Panc1 (cell line): ENCODE measurements at regions of chr7 and their contacts with region 1.

Region 1: DNA sequence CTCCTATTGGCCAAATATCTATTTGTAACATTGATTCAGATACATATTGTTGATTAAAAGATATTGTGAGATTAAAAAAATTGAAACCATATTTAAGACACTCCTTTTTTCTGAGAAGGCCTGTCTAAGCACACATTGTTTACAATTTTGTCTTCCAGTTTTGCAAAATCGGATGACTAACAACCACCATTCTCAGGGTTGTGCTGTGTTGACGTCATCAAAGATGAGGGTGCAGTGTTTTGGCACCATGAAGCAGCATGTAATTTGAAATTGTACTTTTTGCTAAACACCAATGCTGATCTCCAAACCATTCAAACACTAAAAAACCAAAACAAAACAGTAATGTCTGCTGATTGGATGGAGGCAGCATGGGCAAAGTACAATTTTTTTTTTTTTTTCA is 7.4 kb downstream of the CREB5 start:
- DNase-seq: no peak
- ATAC-seq: no peak
- H3K4me3 ChIP-seq: no peak overlapping the region
- H3K27ac ChIP-seq: no peak overlapping the region
- H3K4me1 ChIP-seq: no peaks in the 10 kb centered on the region
- H3K27me3 ChIP-seq: peaks cover 32% of the 10 kb centered on the region
- CTCF ChIP-seq: no peak

Region 2: DNA sequence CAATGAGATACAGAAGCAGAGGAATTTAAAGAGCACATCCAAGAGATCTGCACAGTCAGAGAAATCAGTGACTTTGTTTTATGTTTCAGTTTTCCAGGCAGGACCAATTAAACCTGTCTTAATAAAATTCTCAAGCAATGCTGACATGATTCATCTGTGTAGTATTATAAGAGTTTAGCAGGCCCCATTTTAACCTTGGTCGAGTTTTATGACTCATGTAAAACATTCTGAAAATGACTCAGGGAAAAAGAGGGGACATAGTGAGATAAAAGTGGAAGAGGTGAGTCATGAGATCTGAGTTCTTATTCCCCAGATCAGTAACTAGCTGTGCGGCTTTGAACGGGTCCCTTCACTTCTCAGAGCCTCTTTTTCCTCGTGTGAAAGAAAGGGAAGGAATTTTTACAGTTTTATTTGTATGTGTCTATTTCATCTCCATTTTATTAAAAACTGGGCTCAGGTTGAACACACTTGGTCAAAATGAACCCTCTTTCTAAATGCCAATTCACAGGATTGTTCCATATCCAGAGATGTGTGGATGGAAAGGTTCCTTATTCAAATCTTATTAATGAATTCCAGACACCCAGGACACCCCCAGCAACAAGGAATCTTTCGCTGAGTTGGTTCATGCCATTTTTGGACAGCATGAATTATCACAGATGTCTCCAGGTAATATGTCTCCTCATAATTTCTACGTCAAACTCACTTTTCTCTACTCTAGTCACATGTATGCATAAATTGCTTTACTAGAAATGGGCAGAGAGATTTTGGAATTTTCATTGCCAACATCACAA is 382.3 kb before region 1 on chr7:
- CTCF ChIA-PET with region 1: no interaction called
- POLR2A ChIA-PET with region 1: no interaction called
- in situ Hi-C with region 1: no loop called
- intact Hi-C with region 1: no loop called
- DNase-seq: peak; percentile 96
- ATAC-seq: peak; percentile 92
- H3K4me3 ChIP-seq: peak overlapping the region in 1 of 2 experiments; percentile 17; a peak in 1 of 4 replicates
- H3K27ac ChIP-seq: peak overlapping the region; percentile 93
- H3K4me1 ChIP-seq: peaks cover 76% of the 10 kb centered on the region
- H3K27me3 ChIP-seq: no peaks in the 10 kb centered on the region
- CTCF ChIP-seq: no peak

Region 3: DNA sequence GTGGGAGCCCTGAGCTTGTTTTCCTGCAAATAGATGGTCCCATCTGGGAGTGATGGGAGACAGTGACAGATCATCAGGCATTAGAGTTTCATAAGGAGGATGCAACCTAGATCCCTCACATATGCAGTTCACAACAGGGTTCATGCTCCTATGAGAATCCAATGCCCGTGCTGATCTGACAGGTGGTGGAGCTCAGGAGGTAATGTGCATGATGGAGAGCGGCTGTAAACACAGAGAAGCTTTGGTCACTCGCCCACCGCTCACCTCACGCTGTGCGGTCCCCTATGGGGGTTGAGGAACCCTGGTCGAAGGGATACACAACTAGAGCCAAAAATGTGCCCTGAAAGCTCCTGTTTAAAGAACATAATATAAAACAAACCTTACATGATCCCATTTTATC is 95.9 kb before region 1 on chr7:
- CTCF ChIA-PET with region 1: no interaction called
- POLR2A ChIA-PET with region 1: interaction called, 13 read pairs
- in situ Hi-C with region 1: no loop called
- intact Hi-C with region 1: no loop called
- DNase-seq: no peak
- ATAC-seq: no peak
- H3K4me3 ChIP-seq: no peak overlapping the region
- H3K27ac ChIP-seq: no peak overlapping the region
- H3K4me1 ChIP-seq: no peaks in the 10 kb centered on the region
- H3K27me3 ChIP-seq: peaks cover 6% of the 10 kb centered on the region
- CTCF ChIP-seq: no peak

Region 4: DNA sequence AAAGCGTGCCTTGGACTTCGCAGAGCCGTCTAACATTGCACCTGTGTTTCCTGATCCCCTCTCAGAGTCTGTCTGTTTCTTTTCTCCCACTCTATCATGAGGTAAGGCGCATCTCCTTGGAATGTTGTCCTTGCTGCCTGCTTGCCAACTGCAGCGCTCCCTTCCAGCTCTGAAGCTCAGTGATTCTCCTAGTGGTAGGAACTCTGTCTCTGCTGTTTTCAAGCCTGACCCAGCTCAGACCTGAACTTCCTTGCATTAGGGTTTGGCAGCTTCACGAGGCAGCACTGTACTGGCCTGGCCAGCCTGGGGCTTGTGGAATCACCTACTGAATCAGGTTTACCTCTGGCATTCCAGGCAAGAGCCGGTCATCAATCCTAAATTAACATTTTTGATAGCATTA is 116.5 kb after region 1 on chr7:
- CTCF ChIA-PET with region 1: no interaction called
- POLR2A ChIA-PET with region 1: no interaction called
- in situ Hi-C with region 1: no loop called
- intact Hi-C with region 1: no loop called
- DNase-seq: no peak
- ATAC-seq: peak; percentile 84
- H3K4me3 ChIP-seq: no peak overlapping the region
- H3K27ac ChIP-seq: no peak overlapping the region
- H3K4me1 ChIP-seq: no peaks in the 10 kb centered on the region
- H3K27me3 ChIP-seq: peaks cover 8% of the 10 kb centered on the region
- CTCF ChIP-seq: peak; percentile 52